ENCODE measurements at regions of chr7 and their contacts with region 1.

Region 1: GRCh38 chr7:29764227-29764626 is 42.1 kb upstream of the WIPF3 start:
- DNase-seq: peak in 1 of 2 experiments; percentile 58
- H3K4me3 ChIP-seq: no peak overlapping the region
- H3K27ac ChIP-seq: no peak overlapping the region
- H3K4me1 ChIP-seq: peaks cover 0 to 6% (median 0%) of the 10 kb centered on the region in 4 experiments; a peak in 2 of 7 replicates
- H3K27me3 ChIP-seq: no peaks in the 10 kb centered on the region
- CTCF ChIP-seq: peak; percentile 73 to 82 (median 80)
- EP300 ChIP-seq: no peak
- POLR2A ChIP-seq: no peak
- RAD21 ChIP-seq: peak; percentile 91

Region 2: DNA sequence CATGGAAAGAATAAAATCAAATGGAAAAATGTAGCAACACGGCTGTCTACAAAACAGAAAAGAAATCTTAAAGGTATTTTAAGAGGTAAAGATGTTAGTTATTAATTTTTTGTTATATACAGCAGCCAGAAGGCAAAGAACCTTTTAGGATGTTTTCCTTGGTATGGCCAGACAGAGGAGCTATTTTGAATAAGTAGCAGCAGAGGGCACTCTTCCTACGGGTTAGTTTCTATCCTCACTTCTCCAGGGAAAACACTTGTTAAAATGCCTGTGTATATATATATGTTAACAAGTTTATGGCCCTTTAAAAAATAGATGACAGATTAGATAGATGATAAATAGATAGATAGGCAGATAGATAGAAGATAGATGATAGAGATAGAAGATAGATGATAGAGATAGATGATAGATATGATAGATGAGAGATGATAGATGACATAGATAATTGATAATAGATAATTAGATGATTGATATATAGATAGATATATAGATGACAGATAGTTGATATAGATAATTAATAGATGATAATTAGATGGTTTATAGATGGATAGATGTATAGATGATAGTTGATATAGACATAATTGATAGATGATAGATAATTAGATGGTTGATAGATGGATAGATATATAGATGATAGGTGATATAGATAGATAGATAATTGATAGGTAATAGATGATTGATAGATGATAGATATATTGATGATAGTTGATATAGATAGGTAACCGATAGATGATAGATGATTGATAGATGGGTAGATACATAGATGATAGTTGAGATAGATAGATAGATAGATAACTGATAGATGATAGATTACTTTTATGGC is 15.7 kb before region 1 on chr7:
- CTCF ChIA-PET with region 1: interaction called, 10 read pairs
- POLR2A ChIA-PET with region 1: no interaction called
- DNase-seq: no peak
- H3K4me3 ChIP-seq: no peak overlapping the region
- H3K27ac ChIP-seq: no peak overlapping the region
- H3K4me1 ChIP-seq: no peaks in the 10 kb centered on the region
- H3K27me3 ChIP-seq: no peaks in the 10 kb centered on the region
- CTCF ChIP-seq: peak in 2 of 3 experiments; percentile 40 to 51; a peak in 2 of 4 replicates
- EP300 ChIP-seq: no peak
- POLR2A ChIP-seq: no peak
- RAD21 ChIP-seq: peak; percentile 60 to 70

Region 3: DNA sequence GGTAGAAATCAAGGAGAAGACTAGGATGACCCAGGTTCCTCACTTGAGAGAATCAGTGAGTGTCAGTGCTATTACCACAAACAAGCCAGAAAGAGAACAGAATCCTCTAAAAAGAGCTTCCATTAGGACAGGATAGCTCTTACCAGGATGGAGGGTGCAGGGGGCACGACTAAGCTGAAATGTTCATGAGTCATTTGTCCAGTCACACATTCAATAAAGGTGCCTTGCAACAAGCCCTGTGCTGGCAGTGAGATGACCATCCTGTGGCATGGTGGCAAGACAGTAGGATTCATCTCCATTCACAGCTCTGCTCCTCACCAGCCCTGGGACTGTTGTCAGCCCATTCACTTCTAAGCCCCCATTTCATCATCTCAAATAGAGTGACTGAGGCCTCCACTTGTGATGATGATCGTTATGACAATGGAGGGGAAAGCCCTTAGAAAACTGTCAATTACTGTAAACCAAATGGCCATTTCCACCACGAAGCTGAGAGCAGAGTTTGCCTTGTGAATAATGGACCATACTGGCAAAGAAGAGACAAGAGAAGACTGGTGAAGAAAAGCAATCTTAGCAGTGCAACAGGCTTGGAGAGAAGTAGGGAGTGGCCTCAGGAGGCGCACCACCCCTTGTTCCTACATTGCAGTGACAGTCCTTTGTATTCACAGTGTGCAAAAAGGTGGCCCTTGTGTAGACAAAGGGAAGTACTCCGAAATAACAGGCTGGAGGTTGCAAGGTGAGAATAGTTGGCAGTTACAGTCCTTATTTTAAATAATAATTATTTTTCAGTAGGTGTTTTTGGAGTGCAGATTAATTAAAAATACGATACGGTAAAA is 33.1 kb after region 1 on chr7:
- CTCF ChIA-PET with region 1: no interaction called
- POLR2A ChIA-PET with region 1: no interaction called
- DNase-seq: no peak
- H3K4me3 ChIP-seq: no peak overlapping the region
- H3K27ac ChIP-seq: no peak overlapping the region
- H3K4me1 ChIP-seq: peaks cover 0 to 6% (median 2%) of the 10 kb centered on the region in 4 experiments; a peak in 3 of 7 replicates
- H3K27me3 ChIP-seq: no peaks in the 10 kb centered on the region
- CTCF ChIP-seq: no peak
- EP300 ChIP-seq: no peak
- POLR2A ChIP-seq: no peak
- RAD21 ChIP-seq: no peak

Measured in H1 (cell line).